Thyroid gland (tissue), 4 donors: ENCODE measurements at regions of chr1 and their contacts with region 1.

Region 1: GRCh38 chr1:170765712-170766330 is 101.9 kb downstream of the PRRX1 start:
- DNase-seq: no peak
- H3K4me3 ChIP-seq: no peak overlapping the region
- H3K27ac ChIP-seq: no peak overlapping the region
- H3K4me1 ChIP-seq: no peaks in the 10 kb centered on the region
- H3K27me3 ChIP-seq: no peaks in the 10 kb centered on the region
- CTCF ChIP-seq: peak in 5 of 6 experiments; percentile 8 to 83 (median 72)
- POLR2A ChIP-seq: no peak

Region 2: GRCh38 chr1:170685166-170685565 is 80.7 kb before region 1 on chr1:
- intact Hi-C with region 1: loop called (anchors 10 kb)
- DNase-seq: no peak
- H3K4me3 ChIP-seq: no peak overlapping the region
- H3K27ac ChIP-seq: no peak overlapping the region
- H3K4me1 ChIP-seq: peaks cover 0 to 5% of the 10 kb centered on the region in 2 donors
- H3K27me3 ChIP-seq: no peaks in the 10 kb centered on the region
- CTCF ChIP-seq: no peak
- POLR2A ChIP-seq: no peak